ENCODE measurements at regions of chr20 and their contacts with region 1.

Region 1: GRCh38 chr20:62475027-62475771 is 596 bp downstream of the GATA5 start:
- DNase-seq: no peak
- ATAC-seq: peak in 1 of 4 donors; percentile 6
- H3K4me3 ChIP-seq: peak overlapping the region; percentile 22 to 63 (median 46)
- H3K27ac ChIP-seq: no peak overlapping the region
- H3K4me1 ChIP-seq: peaks cover 0 to 20% (median 8%) of the 10 kb centered on the region in 12 donors
- H3K27me3 ChIP-seq: peaks cover 26 to 78% (median 47%) of the 10 kb centered on the region in 9 donors
- CTCF ChIP-seq: no peak
- POLR2A ChIP-seq: no peak

Region 2: DNA sequence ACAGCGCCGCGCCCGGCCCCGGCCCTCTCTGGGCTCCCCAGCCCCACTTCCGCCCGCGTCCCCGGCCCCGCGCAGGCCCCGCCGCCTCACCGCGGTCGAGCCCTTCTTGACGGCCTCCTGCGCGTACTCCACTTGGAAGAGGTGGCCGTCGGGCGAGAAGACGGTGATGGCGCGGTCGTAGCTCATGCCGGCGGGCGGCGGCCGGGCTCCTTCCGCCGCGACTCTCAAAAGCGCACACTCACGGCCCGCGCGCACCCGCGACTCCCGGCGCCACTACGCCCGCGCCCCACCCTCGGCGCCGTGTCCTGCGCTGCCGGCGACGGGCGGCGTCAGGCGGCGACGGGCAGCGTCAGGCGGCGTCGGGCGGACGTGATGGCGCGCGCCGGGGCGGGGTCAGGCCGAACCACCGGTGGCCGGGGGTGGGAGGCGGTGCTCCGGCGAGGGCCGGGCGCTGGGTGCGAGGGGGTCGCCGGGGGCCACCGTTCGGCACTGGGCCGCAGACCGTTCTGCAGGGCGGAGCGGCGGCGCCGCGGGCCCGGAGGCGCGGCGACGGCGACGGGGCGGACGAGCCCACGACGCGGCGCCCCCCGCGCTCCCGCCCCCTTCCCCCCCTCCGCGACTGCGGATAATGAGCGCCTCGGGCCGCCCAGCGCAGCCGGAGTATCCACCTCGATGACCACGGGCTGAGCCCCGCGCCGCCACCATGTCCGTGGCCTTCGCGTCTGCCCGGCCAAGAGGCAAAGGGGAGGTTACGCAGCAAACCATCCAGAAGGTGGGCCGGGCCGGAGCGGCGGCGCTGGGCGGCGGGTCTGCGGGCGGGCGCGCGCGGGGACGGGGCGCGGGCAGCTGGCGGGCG is 331.9 kb before region 1 on chr20 and contains the starts of genes PSMA7 and SS18L1:
- intact Hi-C with region 1: no loop called
- DNase-seq: peak; percentile 87 to 94 (median 91)
- ATAC-seq: peak; percentile 76 to 94 (median 92)
- H3K4me3 ChIP-seq: peak within 1 kb of the TSS; percentile 75 to 100 (median 88)
- H3K27ac ChIP-seq: peak within 1 kb of the TSS; percentile 89 to 100 (median 98)
- H3K4me1 ChIP-seq: peaks cover 6 to 41% (median 30%) of the 10 kb centered on the region in 12 donors
- H3K27me3 ChIP-seq: no peaks in the 10 kb centered on the region
- CTCF ChIP-seq: no peak
- POLR2A ChIP-seq: peak; percentile 87 to 96
- total RNA-seq, gene PSMA7: 172 to 432 (median 233) TPM
- total RNA-seq, gene SS18L1: 6.5 to 12.4 (median 8.6) TPM

Region 3: DNA sequence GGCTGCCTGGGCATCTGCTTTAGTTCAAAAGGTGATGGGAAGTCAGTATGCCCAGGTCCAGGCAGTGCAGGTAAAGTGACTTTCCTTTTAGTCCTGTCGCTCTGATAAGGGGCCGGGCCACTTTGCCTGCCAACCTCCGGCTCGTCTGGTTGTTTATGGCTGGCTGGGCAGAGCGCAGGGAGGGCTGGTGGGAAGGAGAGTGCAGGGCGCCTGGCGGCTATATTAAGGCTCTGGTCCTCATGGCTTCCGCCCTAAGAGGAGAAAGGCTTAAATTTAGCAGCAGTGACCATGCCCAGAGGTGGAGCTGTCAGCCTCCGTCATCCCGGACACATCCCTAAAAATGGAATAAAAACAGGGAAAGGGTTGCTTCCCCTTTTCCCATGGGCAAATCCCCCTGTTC is 14.0 kb before region 1 on chr20:
- intact Hi-C with region 1: loop called in 1 of 10 experiments (anchors 1 kb)
- DNase-seq: peak in 4 of 5 donors; percentile 55 to 79 (median 62)
- ATAC-seq: peak; percentile 84 to 93 (median 86)
- H3K4me3 ChIP-seq: no peak overlapping the region
- H3K27ac ChIP-seq: peak overlapping the region in 4 of 12 donors; percentile 19 to 54 (median 51)
- H3K4me1 ChIP-seq: peaks cover 0 to 14% (median 4%) of the 10 kb centered on the region in 12 donors
- H3K27me3 ChIP-seq: peaks cover 0 to 22% (median 4%) of the 10 kb centered on the region in 9 donors
- CTCF ChIP-seq: no peak
- POLR2A ChIP-seq: no peak

Region 4: DNA sequence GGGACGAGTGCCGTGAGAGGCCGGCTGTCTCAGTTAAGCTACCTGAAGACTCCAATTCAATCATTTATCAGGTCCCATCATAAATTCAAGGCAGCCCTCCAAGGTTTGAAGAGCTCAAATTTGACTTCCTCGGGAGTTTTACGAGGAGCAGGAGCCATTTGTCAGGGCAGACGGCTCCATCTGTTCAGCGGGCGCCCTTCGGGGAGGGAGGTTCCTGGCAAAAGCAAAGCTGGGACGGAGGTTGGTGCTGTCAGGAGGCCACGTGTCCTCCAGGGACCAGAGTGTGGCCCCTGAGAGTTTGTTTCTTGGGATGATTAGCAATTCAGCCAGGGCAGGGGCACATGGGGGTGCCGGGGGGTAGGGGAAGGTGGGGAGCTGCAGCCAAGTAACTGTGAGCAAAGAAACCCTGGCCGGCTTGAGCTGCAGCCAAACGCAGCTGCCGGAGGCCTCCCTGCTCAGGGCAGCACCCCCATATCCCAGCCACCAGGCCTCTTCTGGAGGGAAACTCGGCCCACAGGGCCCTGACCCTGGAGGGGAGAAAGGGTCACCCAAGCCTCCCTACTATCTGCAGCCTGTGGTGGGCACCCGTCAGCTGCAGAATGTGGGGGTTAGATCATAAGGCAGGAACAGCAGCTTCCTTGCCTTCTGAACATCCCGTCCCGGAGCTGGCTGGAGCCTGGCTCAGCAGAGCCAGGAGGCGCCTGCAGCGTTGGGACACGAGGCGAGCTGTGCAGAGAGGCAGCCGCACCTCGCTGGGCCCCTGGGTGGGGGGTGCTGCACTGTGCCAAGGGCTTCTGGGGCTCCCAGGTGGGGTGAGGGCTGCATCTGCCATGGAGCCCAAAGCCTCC is 64.2 kb after region 1 on chr20:
- intact Hi-C with region 1: no loop called
- DNase-seq: no peak
- ATAC-seq: peak in 3 of 4 donors; percentile 20 to 63 (median 21)
- H3K4me3 ChIP-seq: no peak overlapping the region
- H3K27ac ChIP-seq: peak overlapping the region in 6 of 12 donors; percentile 14 to 80 (median 44)
- H3K4me1 ChIP-seq: peaks cover 0 to 29% (median 5%) of the 10 kb centered on the region in 12 donors
- H3K27me3 ChIP-seq: peaks cover 0 to 5% (median 0%) of the 10 kb centered on the region in 9 donors
- CTCF ChIP-seq: no peak
- POLR2A ChIP-seq: no peak